ENCODE measurements at regions of chr15 and their contacts with region 1.

Region 1: DNA sequence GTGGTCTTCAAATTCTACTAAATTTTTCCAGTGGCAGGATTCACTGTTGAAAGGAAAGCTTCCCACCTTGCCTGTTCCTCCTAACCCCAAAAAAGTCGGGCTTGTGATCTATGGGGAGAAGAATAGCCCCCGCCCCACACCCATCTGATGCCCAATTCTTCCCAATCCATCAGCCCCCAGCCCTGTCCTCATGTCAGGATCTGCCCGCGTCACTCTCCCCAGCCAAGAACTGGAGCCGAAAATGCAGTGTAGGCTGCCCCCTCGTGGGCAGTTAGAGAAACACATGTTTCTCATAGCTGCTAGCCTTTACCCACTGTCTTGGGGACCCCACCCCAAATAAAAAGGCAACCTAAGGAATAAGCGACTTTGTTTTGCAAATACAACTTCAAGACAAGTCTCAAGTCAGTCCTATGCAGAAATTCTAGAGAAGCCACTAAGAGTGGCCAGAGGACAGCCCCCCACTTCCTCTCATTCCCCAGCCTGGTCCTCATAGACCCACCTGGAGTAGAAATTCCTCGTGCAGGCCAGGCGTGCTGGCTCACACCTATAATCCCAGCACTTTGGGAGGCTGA is 13.0 kb upstream of the CSK start:
- DNase-seq: peak in 3 of 4 donors; percentile 42 to 85 (median 69)
- ATAC-seq: peak; percentile 78
- H3K4me3 ChIP-seq: no peak overlapping the region
- H3K27ac ChIP-seq: no peak overlapping the region
- H3K4me1 ChIP-seq: peaks cover 5 to 19% of the 10 kb centered on the region in 2 donors
- H3K27me3 ChIP-seq: peaks cover 0 to 4% of the 10 kb centered on the region in 2 donors
- CTCF ChIP-seq: peak; percentile 67 to 84

Region 2: GRCh38 chr15:74635228-74635627 is 133.6 kb before region 1 on chr15:
- intact Hi-C with region 1: loop called (anchors 2 to 10 kb)
- DNase-seq: peak in 1 of 4 donors; percentile 67
- ATAC-seq: peak; percentile 88
- H3K4me3 ChIP-seq: no peak overlapping the region
- H3K27ac ChIP-seq: no peak overlapping the region
- H3K4me1 ChIP-seq: peaks cover 0 to under 1% of the 10 kb centered on the region in 2 donors
- H3K27me3 ChIP-seq: no peaks in the 10 kb centered on the region
- CTCF ChIP-seq: peak; percentile 76 to 92

Region 3: DNA sequence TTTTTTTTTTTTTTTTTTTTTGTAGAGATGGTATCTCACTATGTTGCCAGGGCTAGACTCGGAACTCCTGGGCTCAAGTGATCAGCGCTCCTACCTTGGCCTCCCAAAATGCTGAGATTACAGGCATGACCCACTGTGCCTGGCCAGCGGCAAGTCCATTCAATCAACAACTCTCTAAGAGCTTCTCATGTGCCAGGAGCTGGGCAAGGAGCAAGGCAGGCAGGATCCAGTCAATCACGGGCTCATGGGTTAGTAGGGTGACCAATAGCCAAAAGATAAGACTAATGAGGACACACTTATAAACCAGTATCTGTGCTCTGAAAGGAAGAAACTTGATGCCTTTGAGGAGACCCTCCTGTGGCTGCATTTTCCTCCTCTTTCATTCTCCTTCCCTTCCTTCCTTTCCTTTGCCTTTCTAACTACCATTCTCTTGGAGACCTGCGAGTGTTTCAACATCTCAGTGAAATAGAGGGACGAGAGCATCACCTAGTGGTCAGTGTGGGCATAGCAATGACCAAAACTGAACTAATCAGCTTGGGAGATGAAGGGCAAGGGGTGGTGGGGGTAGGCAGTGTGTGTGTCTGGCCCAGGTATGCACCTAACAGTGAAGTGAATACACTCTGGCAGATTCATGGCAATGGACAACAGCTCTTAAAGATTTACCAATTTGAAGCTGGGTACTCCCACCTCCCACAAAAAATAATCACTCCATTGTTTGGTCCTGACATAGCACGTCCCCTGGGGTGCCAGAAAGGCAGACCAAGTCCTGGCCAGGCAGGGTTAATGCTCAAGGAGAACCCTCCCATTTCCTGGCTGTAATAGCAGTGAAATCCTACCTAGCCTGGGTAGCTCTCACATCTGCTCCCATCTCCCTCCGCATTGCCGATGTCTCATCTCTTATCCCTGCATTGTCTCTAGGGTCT is 181.5 kb after region 1 on chr15:
- intact Hi-C with region 1: loop called in 1 of 2 experiments (anchors 5 kb)
- DNase-seq: peak in 3 of 4 donors; percentile 53 to 82 (median 76)
- ATAC-seq: peak; percentile 92
- H3K4me3 ChIP-seq: no peak overlapping the region
- H3K27ac ChIP-seq: no peak overlapping the region
- H3K4me1 ChIP-seq: peaks cover 10 to 15% of the 10 kb centered on the region in 2 donors
- H3K27me3 ChIP-seq: peaks cover 0 to 5% of the 10 kb centered on the region in 2 donors
- CTCF ChIP-seq: peak; percentile 90 to 95